Activated CD4-positive, alpha-beta memory T cell treated with anti-CD3 and anti-CD28 coated beads for 36 hours (primary cell): ENCODE measurements at regions of chr15 and their contacts with region 1.

Region 1: GRCh38 chr15:71329497-71330260 is 214.4 kb downstream of the THSD4 start:
- DNase-seq: no peak
- H3K4me3 Mint-ChIP-seq: no peak overlapping the region
- H3K27ac Mint-ChIP-seq: no peak overlapping the region
- H3K4me1 Mint-ChIP-seq: peaks cover 9% of the 10 kb centered on the region
- H3K27me3 Mint-ChIP-seq: no peaks in the 10 kb centered on the region

Region 2: DNA sequence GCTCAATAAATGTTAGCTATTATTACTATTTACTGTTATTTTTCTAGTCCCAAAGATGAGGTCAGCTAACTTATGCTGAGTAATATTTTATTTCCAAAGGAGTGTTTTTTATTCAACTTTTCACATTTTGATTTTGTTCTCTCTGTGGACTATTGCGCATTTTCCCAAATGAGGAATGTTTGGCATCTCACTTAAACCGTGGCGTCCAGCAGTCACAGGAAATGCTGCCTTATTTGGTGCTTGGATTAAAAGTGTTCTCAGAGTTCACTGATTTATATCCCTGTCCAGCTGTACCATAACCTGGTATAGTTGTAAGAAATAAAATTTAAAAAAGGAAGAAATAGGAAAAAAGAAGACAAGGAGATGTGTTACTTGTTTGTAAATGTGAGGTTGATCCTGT is 47.6 kb before region 1 on chr15:
- CTCF ChIA-PET with region 1: no interaction called
- POLR2A ChIA-PET with region 1: no interaction called
- intact Hi-C with region 1: no loop called
- DNase-seq: no peak
- H3K4me3 Mint-ChIP-seq: no peak overlapping the region
- H3K27ac Mint-ChIP-seq: no peak overlapping the region
- H3K4me1 Mint-ChIP-seq: no peaks in the 10 kb centered on the region
- H3K27me3 Mint-ChIP-seq: peaks cover 5% of the 10 kb centered on the region

Region 3: DNA sequence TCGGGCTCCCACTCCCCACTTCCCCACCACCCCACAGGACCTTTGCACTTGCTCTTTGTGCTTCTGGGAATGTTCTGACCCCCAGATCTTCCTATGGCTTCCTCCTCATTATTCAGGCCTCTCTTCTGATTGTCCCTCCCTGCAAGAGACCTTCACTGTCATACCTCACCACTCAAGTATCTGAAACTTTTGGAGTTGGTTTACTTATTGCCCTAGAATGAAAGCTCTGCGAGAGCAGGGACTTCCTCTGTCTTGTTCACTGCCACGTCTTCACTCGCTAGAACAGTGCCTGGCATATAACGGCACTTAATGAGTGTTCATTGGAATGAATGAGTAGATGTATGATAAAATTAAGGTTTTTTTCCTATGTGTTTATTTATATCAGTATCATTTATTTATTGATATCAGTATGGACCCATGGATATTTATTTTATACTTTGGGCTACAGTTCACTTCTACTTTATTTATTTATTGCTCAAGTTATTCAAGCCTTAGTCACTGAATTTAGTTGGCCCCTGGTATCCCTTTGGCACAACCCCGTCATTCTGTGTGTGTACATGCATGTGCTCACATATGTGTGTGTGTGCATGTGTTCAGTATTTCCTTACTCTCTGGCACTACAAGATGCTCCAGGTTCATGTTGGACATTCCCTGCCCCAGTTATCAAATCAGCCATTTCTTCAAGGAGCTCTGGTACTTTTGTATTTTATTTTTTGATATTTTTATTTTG is 16.8 kb before region 1 on chr15:
- CTCF ChIA-PET with region 1: no interaction called
- POLR2A ChIA-PET with region 1: no interaction called
- intact Hi-C with region 1: loop called (anchors 1 kb)
- DNase-seq: no peak
- H3K4me3 Mint-ChIP-seq: no peak overlapping the region
- H3K27ac Mint-ChIP-seq: no peak overlapping the region
- H3K4me1 Mint-ChIP-seq: no peaks in the 10 kb centered on the region
- H3K27me3 Mint-ChIP-seq: no peaks in the 10 kb centered on the region

Region 4: GRCh38 chr15:71526060-71526820 is 196.6 kb after region 1 on chr15:
- CTCF ChIA-PET with region 1: no interaction called
- POLR2A ChIA-PET with region 1: no interaction called
- intact Hi-C with region 1: no loop called
- DNase-seq: no peak
- H3K4me3 Mint-ChIP-seq: no peak overlapping the region
- H3K27ac Mint-ChIP-seq: no peak overlapping the region
- H3K4me1 Mint-ChIP-seq: no peaks in the 10 kb centered on the region
- H3K27me3 Mint-ChIP-seq: peaks cover 28% of the 10 kb centered on the region

Region 5: DNA sequence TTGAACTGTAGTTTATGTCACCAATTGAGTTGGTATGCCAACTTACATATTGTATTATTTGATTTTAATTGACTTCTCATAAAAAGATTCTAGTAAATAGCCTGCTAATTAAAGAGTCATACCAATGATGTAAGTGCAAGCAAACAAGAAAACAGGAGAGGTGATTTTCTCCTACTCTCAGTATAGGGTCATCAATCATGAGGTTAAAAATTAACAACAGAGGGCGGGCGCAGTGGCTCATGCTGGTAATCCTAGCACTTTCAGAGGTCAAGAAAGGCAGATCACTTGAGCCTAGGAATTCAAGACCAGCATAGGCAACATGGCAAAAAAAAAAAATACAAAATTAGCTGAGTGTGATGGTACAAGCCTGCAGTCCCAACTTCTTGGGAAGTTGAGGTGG is 679.5 kb after region 1 on chr15:
- CTCF ChIA-PET with region 1: no interaction called
- POLR2A ChIA-PET with region 1: no interaction called
- intact Hi-C with region 1: no loop called
- DNase-seq: no peak
- H3K4me3 Mint-ChIP-seq: no peak overlapping the region
- H3K27ac Mint-ChIP-seq: no peak overlapping the region
- H3K4me1 Mint-ChIP-seq: peaks cover 4% of the 10 kb centered on the region
- H3K27me3 Mint-ChIP-seq: no peaks in the 10 kb centered on the region